ENCODE measurements at regions of chr9 and their contacts with region 1.

Region 1: GRCh38 chr9:6584881-6585597 is 60.5 kb downstream of the GLDC start:
- DNase-seq: no peak
- H3K4me3 ChIP-seq: no peak overlapping the region
- H3K27ac ChIP-seq: no peak overlapping the region
- H3K4me1 ChIP-seq: no peaks in the 10 kb centered on the region
- H3K27me3 ChIP-seq: no peaks in the 10 kb centered on the region
- CTCF ChIP-seq: peak; percentile 47 to 48

Region 2: GRCh38 chr9:6160579-6160978 is 424.5 kb before region 1 on chr9:
- CTCF ChIA-PET with region 1: no interaction called
- dilution Hi-C with region 1: no loop called
- in situ Hi-C with region 1: no loop called
- intact Hi-C with region 1: no loop called
- DNase-seq: no peak
- H3K4me3 ChIP-seq: no peak overlapping the region
- H3K27ac ChIP-seq: no peak overlapping the region
- H3K4me1 ChIP-seq: no peaks in the 10 kb centered on the region
- H3K27me3 ChIP-seq: no peaks in the 10 kb centered on the region
- CTCF ChIP-seq: no peak

Region 3: GRCh38 chr9:6598249-6598725 is 13.2 kb after region 1 on chr9:
- CTCF ChIA-PET with region 1: interaction called, 12 read pairs
- dilution Hi-C with region 1: no loop called
- in situ Hi-C with region 1: no loop called
- intact Hi-C with region 1: no loop called
- DNase-seq: peak; percentile 29
- H3K4me3 ChIP-seq: no peak overlapping the region
- H3K27ac ChIP-seq: no peak overlapping the region
- H3K4me1 ChIP-seq: no peaks in the 10 kb centered on the region
- H3K27me3 ChIP-seq: no peaks in the 10 kb centered on the region
- CTCF ChIP-seq: no peak

Region 4: GRCh38 chr9:6645355-6646292 is 60.6 kb after region 1 on chr9 and contains the start of gene GLDC:
- CTCF ChIA-PET with region 1: no interaction called
- dilution Hi-C with region 1: loop called (anchors 5 kb)
- in situ Hi-C with region 1: no loop called
- intact Hi-C with region 1: no loop called
- DNase-seq: peak; percentile 31
- H3K4me3 ChIP-seq: peak within 1 kb of the TSS; percentile 62 to 63 (median 63)
- H3K27ac ChIP-seq: no peak within 1 kb of the TSS
- H3K4me1 ChIP-seq: peaks cover 2% of the 10 kb centered on the region
- H3K27me3 ChIP-seq: no peaks in the 10 kb centered on the region
- CTCF ChIP-seq: peak in 1 of 2 donors; percentile 6
- total RNA-seq, gene GLDC: 0.33 to 1.9 TPM

Region 5: GRCh38 chr9:6667633-6668280 is 82.7 kb after region 1 on chr9:
- CTCF ChIA-PET with region 1: no interaction called
- dilution Hi-C with region 1: no loop called
- in situ Hi-C with region 1: no loop called
- intact Hi-C with region 1: loop called (anchors 1 kb)
- DNase-seq: no peak
- H3K4me3 ChIP-seq: no peak overlapping the region
- H3K27ac ChIP-seq: no peak overlapping the region
- H3K4me1 ChIP-seq: no peaks in the 10 kb centered on the region
- H3K27me3 ChIP-seq: no peaks in the 10 kb centered on the region
- CTCF ChIP-seq: peak; percentile 49 to 61

Region 6: DNA sequence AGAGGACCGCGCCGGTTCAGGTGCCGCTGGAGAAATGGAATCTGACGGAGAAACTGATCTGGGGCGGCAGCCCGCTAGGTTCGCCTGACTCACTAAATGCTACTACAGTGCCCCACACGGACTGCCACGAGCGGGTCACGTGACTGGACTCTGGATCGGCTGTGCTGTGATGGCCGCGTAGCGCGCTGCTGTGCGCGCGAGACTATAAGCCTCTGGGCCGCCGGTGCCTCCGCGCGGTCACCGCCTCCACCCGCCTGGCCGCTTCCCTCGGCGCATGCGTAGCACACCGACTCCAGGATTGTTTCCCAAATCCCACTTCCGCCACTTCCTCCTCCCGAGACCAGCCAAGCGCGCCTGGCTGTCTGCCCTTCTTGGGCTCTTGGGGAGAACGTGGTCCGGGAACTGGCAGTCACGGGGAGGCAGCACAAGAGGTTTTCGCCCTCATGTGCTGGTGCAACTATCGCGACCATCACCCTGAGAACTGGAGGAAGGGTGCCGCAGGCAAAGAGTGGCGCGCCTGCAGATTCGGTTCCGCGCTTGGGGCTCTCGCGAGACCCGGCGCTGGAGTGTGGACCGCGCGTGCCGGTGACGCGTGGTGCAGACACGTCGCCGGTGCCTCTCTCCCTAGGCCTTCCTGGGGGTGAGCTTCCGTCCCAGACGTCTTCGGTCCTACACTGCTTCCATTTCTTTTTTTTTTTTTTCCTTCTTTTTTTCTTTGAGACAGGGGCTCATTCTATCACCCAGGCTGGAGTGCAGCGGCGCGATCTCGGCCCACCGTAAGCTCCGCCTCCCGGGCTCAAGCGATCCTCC is 96.3 kb after region 1 on chr9:
- CTCF ChIA-PET with region 1: no interaction called
- dilution Hi-C with region 1: no loop called
- in situ Hi-C with region 1: loop called in 1 of 2 experiments (anchors 25 kb)
- intact Hi-C with region 1: loop called (anchors 5 kb)
- DNase-seq: peak; percentile 96
- H3K4me3 ChIP-seq: peak overlapping the region; percentile 70 to 79 (median 75)
- H3K27ac ChIP-seq: peak overlapping the region; percentile 92
- H3K4me1 ChIP-seq: peaks cover 11% of the 10 kb centered on the region
- H3K27me3 ChIP-seq: no peaks in the 10 kb centered on the region
- CTCF ChIP-seq: no peak

Region 7: GRCh38 chr9:6739218-6739617 is 154.2 kb after region 1 on chr9:
- CTCF ChIA-PET with region 1: no interaction called
- dilution Hi-C with region 1: no loop called
- in situ Hi-C with region 1: loop called in 1 of 2 experiments (anchors 10 kb)
- intact Hi-C with region 1: loop called (anchors 1 kb)
- DNase-seq: no peak
- H3K4me3 ChIP-seq: no peak overlapping the region
- H3K27ac ChIP-seq: no peak overlapping the region
- H3K4me1 ChIP-seq: no peaks in the 10 kb centered on the region
- H3K27me3 ChIP-seq: no peaks in the 10 kb centered on the region
- CTCF ChIP-seq: peak in 1 of 2 donors; percentile 40

Measured in mammary epithelial cell (primary cell).